HCT116 (cell line): ENCODE measurements at regions of chr12 and their contacts with region 1.

Region 1: GRCh38 chr12:57462251-57462911 is 2.8 kb downstream of the GLI1 start:
- DNase-seq: peak; percentile 93
- ATAC-seq: peak; percentile 81
- H3K4me3 ChIP-seq: peak overlapping the region; percentile 75
- H3K27ac ChIP-seq: peak overlapping the region; percentile 65
- H3K4me1 ChIP-seq: peaks cover 20 to 44% of the 10 kb centered on the region in 2 experiments
- H3K27me3 ChIP-seq: peaks cover 4% of the 10 kb centered on the region
- CTCF ChIP-seq: peak in 2 of 3 experiments; percentile 97 to 98; a peak in 4 of 6 replicates
- POLR2A ChIP-seq: no peak
- RAD21 ChIP-seq: no peak

Region 2: DNA sequence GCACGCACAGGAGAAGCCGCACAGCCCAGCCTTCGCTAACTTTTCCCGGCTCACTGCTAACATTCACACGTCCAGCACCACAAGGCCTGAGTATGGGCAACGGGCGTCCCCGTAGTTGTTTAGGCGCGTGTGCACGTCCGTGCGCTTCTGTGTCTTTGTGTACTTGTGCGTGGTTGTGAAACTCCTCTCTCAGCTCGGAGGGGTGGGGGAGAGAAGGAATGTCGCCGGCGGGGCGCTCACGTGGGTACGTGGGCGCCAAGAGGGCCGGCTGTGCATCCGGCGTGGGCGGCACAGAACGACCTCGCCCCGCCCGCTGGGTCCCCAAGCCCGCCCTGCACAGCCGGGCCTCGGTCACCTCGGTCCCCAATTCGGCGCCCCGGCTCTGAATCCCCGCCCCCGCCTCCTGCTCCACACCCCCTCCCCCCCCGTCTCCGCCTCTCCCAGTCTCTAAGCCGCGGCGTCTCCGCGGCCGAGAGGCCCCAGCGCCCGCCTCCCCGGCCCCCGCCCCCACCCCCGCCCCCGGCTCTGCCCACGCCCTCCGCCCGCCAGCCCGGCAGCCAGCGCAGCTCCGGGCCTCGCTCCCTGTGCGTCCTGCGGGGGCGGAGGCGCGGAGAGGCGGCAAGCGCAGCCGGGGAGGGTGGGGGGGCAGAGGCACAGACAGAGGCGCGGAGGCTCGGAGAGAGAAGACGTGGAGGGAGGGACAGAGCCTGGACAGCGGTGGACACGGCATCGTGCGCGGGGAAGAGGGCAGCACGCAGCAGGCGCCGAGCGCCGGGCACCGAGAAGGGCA is 373.7 kb before region 1 on chr12 and contains the start of gene NAB2:
- CTCF ChIA-PET with region 1: no interaction called
- POLR2A ChIA-PET with region 1: no interaction called
- RAD21 ChIA-PET with region 1: no interaction called
- intact Hi-C with region 1: loop called (anchors 5 kb)
- DNase-seq: peak; percentile 85
- ATAC-seq: peak; percentile 71
- H3K4me3 ChIP-seq: peak within 1 kb of the TSS; percentile 61 to 90
- H3K27ac ChIP-seq: peak within 1 kb of the TSS; percentile 100
- H3K4me1 ChIP-seq: peaks cover 38 to 70% of the 10 kb centered on the region in 2 experiments
- H3K27me3 ChIP-seq: no peaks in the 10 kb centered on the region
- CTCF ChIP-seq: no peak
- POLR2A ChIP-seq: peak; percentile 20
- RAD21 ChIP-seq: no peak
- total RNA-seq, gene NAB2: 77.1 TPM

Region 3: GRCh38 chr12:57268264-57268663 is 194.1 kb before region 1 on chr12:
- CTCF ChIA-PET with region 1: interaction called, 11 read pairs
- POLR2A ChIA-PET with region 1: no interaction called
- RAD21 ChIA-PET with region 1: no interaction called
- intact Hi-C with region 1: no loop called
- DNase-seq: no peak
- ATAC-seq: no peak
- H3K4me3 ChIP-seq: no peak overlapping the region
- H3K27ac ChIP-seq: no peak overlapping the region
- H3K4me1 ChIP-seq: peaks cover 3 to 4% of the 10 kb centered on the region in 2 experiments; a peak in 1 of 4 replicates
- H3K27me3 ChIP-seq: no peaks in the 10 kb centered on the region
- CTCF ChIP-seq: no peak
- POLR2A ChIP-seq: no peak
- RAD21 ChIP-seq: no peak

Region 4: GRCh38 chr12:57487597-57488401 is 25.4 kb after region 1 on chr12 and contains the start of gene MARS1:
- CTCF ChIA-PET with region 1: interaction called, 3 read pairs
- POLR2A ChIA-PET with region 1: no interaction called
- RAD21 ChIA-PET with region 1: no interaction called
- intact Hi-C with region 1: loop called (anchors 2 kb)
- DNase-seq: peak; percentile 94
- ATAC-seq: peak; percentile 94
- H3K4me3 ChIP-seq: peak within 1 kb of the TSS; percentile 97 to 100
- H3K27ac ChIP-seq: peak within 1 kb of the TSS; percentile 68
- H3K4me1 ChIP-seq: peaks cover 4 to 14% of the 10 kb centered on the region in 2 experiments; a peak in 3 of 4 replicates
- H3K27me3 ChIP-seq: no peaks in the 10 kb centered on the region
- CTCF ChIP-seq: peak in 2 of 3 experiments; percentile 37 to 46; a peak in 3 of 6 replicates
- POLR2A ChIP-seq: peak; percentile 53
- RAD21 ChIP-seq: peak; percentile 31; the same call in 1 of the 2 replicates
- total RNA-seq, gene MARS1: 344 TPM